Activated naive CD4-positive, alpha-beta T cell treated with anti-CD3 and anti-CD28 coated beads for 36 hours (primary cell): ENCODE measurements at regions of chr10 and their contacts with region 1.

Region 1: GRCh38 chr10:72292223-72292691 is 18.5 kb downstream of the DDIT4 start:
- DNase-seq: peak; percentile 90
- H3K4me3 Mint-ChIP-seq: peak overlapping the region; percentile 43
- H3K27ac Mint-ChIP-seq: peak overlapping the region; percentile 100
- H3K4me1 Mint-ChIP-seq: peaks cover 59% of the 10 kb centered on the region
- H3K27me3 Mint-ChIP-seq: no peaks in the 10 kb centered on the region

Region 2: GRCh38 chr10:71795248-71795647 is 497.0 kb before region 1 on chr10:
- CTCF ChIA-PET with region 1: no interaction called
- intact Hi-C with region 1: no loop called
- DNase-seq: peak; percentile 42
- H3K4me3 Mint-ChIP-seq: no peak overlapping the region
- H3K27ac Mint-ChIP-seq: no peak overlapping the region
- H3K4me1 Mint-ChIP-seq: peaks cover 14% of the 10 kb centered on the region
- H3K27me3 Mint-ChIP-seq: no peaks in the 10 kb centered on the region

Region 3: DNA sequence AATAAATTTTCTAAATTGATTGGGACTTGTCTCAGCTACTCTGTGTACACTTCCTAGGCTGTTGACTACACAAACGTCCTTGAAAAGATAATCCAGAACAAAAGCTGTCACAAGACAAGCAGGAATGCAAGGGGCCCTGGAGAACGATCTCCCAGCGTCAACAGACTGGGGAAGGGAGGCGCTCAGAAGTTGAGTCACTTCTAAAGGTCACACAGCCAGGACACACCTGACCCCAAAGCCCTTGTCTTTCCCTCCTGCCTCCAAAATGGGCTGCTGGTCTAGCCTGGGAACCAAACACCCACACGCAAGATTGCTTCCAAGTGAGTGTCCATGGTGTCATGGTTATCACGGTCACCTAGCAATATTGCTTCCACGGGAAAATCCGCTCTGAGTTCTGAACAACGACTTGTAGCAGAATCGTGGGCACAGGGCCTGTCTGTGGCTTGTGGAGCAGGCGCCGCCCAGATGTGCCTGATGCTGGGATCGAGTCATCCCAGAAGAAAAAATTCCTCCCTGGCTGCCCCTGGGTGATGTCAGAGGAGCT is 253.7 kb before region 1 on chr10:
- CTCF ChIA-PET with region 1: no interaction called
- intact Hi-C with region 1: no loop called
- DNase-seq: no peak
- H3K4me3 Mint-ChIP-seq: no peak overlapping the region
- H3K27ac Mint-ChIP-seq: no peak overlapping the region
- H3K4me1 Mint-ChIP-seq: peaks cover 2% of the 10 kb centered on the region
- H3K27me3 Mint-ChIP-seq: no peaks in the 10 kb centered on the region

Region 4: DNA sequence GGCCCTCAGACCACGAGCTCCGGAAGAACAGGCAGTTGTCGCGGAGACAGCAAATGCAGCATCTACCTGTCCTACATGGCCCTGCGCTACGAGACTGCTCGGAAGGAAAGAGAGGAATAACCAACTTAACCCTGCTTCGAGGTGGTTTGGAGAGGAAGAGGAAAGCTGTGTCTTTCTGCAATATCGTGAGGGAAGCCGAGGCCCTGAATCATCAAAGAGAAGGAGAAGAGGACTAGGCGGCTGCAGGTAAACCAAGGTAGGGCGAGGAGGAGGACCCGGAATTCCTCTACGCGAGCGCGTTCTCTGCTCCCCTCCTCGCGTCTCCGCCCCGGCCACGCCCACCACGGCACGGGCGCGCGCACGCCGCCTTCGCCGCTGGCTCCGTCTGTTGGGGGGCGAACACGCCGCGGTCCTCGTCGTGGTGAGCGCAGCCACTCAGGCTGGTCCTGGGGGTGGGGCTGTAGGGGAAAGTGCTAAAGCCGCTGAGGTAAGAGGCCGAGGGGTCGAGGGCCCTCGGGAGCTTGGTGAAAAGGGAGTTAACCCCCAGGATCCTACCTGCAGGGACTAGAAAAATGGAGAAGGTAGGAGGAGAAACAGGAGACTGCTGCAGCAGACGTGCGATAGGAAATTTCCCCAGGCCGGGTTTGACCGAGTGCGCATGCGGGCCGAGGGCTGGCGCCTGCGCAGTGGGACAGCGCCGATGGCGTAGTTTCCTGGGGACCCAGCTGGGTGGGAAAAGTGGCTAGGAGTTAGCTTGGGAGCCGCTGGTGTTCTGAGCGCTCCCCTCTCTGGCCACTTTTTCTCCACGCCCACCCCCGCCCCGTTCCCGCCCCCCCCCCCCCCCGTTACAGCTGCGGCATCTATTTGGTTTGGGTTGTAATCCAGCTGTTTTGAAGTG is 76.4 kb before region 1 on chr10 and contains the starts of genes ANAPC16 and ASCC1:
- CTCF ChIA-PET with region 1: no interaction called
- intact Hi-C with region 1: loop called (anchors 1 kb)
- DNase-seq: peak; percentile 93
- H3K4me3 Mint-ChIP-seq: peak within 1 kb of the TSS; percentile 91
- H3K27ac Mint-ChIP-seq: peak within 1 kb of the TSS; percentile 98
- H3K4me1 Mint-ChIP-seq: peaks cover 67% of the 10 kb centered on the region
- H3K27me3 Mint-ChIP-seq: no peaks in the 10 kb centered on the region
- total RNA-seq, gene ANAPC16: 127 to 128 TPM
- total RNA-seq, gene ASCC1: 61.6 to 68.5 TPM

Region 5: DNA sequence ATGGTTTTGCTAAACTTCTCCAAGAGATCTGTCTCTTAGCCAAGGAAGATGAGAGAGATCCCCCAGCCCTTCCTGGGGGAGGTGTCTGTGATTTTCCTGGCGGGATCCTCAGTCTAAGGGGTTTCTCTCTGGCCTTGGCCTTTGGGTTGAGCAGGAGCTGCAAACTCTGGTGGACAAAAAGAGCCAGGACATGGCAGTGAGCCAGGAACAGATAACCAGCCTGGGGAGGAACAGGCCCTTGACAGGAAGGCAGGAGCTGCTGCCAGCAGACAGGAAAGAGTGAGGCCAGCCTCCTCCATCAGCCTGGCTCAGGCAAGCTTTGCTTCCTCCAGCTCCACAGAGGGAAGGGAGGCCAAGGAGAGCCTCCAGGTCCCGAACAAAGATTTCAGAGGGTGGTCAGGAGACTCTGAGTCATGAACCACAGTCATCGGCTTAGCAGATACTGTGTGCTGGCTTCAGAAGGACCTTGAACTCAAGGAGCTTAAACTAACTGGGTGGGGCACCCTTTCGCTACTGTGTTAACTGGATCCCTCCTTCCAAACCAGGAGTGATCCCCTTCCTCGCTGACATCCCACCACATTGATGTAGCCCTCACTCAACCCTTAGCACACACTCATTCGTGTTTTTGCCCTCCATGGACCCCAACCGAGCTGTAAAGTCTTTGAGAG is 16.2 kb after region 1 on chr10:
- CTCF ChIA-PET with region 1: interaction called, 10 read pairs
- intact Hi-C with region 1: loop called (anchors 1 kb)
- DNase-seq: peak; percentile 73
- H3K4me3 Mint-ChIP-seq: no peak overlapping the region
- H3K27ac Mint-ChIP-seq: peak overlapping the region; percentile 87
- H3K4me1 Mint-ChIP-seq: peaks cover 74% of the 10 kb centered on the region
- H3K27me3 Mint-ChIP-seq: no peaks in the 10 kb centered on the region

Region 6: DNA sequence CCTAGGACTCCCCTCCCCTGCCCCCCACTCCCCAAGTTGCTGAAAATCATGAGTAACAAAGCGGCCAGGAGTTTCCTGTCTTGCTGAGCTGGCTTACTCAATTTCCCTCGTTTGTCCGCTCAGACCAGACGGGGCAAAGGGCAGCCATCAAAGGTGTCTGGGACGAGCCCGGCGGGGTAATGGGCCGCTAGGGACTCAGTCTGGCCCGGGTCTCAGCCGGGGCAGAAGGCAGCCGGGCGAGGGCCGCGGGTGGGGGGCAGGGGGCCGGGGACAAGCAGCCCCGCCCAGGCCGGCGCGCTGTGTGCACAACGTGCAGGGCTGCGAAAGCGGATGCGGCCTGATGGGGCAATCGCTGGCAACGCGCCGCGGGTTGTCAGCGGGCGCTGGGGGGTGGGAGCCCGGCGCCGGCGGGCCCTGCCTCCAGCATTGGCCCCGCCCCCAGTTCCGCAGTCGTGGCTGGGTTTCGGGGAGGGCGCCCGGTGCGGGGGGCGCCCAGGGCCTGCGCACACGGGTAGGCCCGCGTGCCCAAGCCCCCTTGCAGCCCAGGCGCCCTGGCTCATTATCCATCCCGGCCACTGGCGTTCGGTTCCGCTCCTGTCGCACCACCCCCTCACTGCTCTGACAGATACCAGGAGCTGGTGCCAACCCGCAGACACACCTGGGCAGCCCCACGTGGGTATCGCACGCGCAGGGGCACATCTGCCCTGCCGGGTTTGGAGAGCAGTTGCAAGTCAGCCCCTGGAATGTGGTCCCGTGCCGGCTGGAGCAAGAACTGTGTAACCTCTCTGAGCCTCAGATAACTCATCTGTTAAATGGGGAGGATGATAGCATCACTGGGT is 27.4 kb after region 1 on chr10:
- CTCF ChIA-PET with region 1: interaction called, 7 read pairs
- intact Hi-C with region 1: loop called (anchors 1 kb)
- DNase-seq: peak; percentile 94
- H3K4me3 Mint-ChIP-seq: peak overlapping the region; percentile 86
- H3K27ac Mint-ChIP-seq: peak overlapping the region; percentile 99
- H3K4me1 Mint-ChIP-seq: peaks cover 79% of the 10 kb centered on the region
- H3K27me3 Mint-ChIP-seq: no peaks in the 10 kb centered on the region